Activated naive CD4-positive, alpha-beta T cell treated with anti-CD3 and anti-CD28 coated beads for 36 hours (primary cell): ENCODE measurements at regions of chr7 and their contacts with region 1.

Region 1: GRCh38 chr7:45940939-45941338 is 19.9 kb upstream of the IGFBP3 start:
- DNase-seq: no peak
- H3K4me3 Mint-ChIP-seq: peak overlapping the region; percentile 77
- H3K27ac Mint-ChIP-seq: no peak overlapping the region
- H3K4me1 Mint-ChIP-seq: peaks cover 15% of the 10 kb centered on the region
- H3K27me3 Mint-ChIP-seq: no peaks in the 10 kb centered on the region

Region 2: GRCh38 chr7:45978010-45978681 is 37.2 kb after region 1 on chr7:
- CTCF ChIA-PET with region 1: no interaction called
- intact Hi-C with region 1: loop called (anchors 1 kb)
- DNase-seq: peak; percentile 49
- H3K4me3 Mint-ChIP-seq: no peak overlapping the region
- H3K27ac Mint-ChIP-seq: no peak overlapping the region
- H3K4me1 Mint-ChIP-seq: peaks cover 12% of the 10 kb centered on the region
- H3K27me3 Mint-ChIP-seq: no peaks in the 10 kb centered on the region